ENCODE measurements at regions of chr6 and their contacts with region 1.

Region 1: DNA sequence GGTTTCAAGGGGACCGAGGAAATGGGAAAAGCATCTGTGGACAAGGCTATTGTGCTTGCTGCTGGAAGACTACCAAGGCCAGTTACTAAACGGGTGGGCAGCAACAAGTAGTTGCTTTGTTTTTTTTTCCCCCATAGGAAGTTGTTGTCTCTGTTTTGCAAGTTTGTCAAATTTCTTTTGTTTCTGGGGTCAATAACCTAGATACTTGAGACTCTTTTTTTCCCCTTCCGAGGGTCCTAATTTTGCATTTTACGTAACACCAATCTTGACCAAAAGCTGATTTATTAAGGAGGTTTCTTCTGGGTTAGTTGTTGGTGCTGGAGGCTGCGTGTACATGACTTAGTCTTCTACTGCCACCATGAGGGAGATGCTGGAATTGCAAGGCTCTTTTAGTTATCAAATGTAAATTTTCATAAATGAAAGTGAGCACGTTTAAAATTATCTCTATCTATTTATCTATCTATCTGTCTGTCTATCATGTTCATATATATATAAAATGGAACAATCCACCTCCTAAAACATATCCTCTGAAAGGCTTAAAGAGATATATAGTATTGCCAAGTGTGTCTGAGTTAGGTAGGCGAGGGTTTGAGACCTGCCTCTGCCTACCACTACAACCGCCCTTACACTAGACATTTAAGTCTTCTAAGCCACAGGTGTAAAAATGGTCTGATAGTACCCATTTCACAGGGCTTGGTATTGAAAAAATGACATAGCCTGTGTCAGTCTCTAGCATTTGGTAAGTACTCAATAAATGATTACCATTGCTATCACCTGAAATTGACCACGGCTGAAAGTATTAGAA is 60.2 kb downstream of the GCLC start:
- DNase-seq: peak; percentile 75
- ATAC-seq: peak; percentile 88
- H3K4me3 ChIP-seq: no peak overlapping the region
- H3K27ac ChIP-seq: no peak overlapping the region
- H3K4me1 ChIP-seq: no peaks in the 10 kb centered on the region
- H3K27me3 ChIP-seq: peaks cover 17% of the 10 kb centered on the region
- CTCF ChIP-seq: peak; percentile 99
- POLR2A ChIP-seq: no peak
- RAD21 ChIP-seq: peak; percentile 97

Region 2: DNA sequence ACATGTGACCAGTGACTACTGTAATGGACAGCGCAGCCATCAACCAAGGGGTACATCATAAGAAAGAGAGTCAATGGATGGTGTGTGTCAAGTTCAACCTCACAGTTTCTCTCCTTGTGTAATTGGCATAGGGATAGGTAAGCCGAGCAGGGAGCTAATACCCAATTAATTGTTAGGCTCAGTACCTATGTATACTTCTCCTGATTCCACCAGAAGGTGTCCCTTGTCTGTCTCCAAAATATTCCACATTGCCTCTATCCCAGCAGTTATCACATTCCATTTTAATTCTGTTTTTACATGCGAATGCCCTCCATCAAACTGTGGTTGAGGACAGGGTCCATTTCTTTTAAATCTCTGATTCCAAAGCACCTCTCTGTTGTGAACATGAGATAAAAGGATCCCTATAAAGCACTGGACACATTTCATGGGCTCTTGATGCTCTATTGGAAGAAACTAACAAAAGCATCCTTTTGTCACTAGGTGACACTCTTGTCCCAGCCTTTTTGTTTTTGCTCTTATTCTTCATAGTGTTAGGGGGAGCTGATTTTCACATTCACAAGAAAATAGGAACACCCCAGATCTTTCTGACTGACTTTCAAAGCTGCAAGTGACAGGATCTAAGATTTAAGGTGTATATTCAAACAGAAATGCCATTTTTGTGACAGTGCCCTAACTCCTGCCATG is 380.5 kb before region 1 on chr6:
- CTCF ChIA-PET with region 1: no interaction called
- POLR2A ChIA-PET with region 1: no interaction called
- dilution Hi-C with region 1: no loop called
- in situ Hi-C with region 1: no loop called
- intact Hi-C with region 1: loop called (anchors 5 kb)
- DNase-seq: no peak
- ATAC-seq: no peak
- H3K4me3 ChIP-seq: no peak overlapping the region
- H3K27ac ChIP-seq: no peak overlapping the region
- H3K4me1 ChIP-seq: peaks cover 9% of the 10 kb centered on the region
- H3K27me3 ChIP-seq: no peaks in the 10 kb centered on the region
- CTCF ChIP-seq: no peak
- POLR2A ChIP-seq: no peak
- RAD21 ChIP-seq: no peak

Region 3: DNA sequence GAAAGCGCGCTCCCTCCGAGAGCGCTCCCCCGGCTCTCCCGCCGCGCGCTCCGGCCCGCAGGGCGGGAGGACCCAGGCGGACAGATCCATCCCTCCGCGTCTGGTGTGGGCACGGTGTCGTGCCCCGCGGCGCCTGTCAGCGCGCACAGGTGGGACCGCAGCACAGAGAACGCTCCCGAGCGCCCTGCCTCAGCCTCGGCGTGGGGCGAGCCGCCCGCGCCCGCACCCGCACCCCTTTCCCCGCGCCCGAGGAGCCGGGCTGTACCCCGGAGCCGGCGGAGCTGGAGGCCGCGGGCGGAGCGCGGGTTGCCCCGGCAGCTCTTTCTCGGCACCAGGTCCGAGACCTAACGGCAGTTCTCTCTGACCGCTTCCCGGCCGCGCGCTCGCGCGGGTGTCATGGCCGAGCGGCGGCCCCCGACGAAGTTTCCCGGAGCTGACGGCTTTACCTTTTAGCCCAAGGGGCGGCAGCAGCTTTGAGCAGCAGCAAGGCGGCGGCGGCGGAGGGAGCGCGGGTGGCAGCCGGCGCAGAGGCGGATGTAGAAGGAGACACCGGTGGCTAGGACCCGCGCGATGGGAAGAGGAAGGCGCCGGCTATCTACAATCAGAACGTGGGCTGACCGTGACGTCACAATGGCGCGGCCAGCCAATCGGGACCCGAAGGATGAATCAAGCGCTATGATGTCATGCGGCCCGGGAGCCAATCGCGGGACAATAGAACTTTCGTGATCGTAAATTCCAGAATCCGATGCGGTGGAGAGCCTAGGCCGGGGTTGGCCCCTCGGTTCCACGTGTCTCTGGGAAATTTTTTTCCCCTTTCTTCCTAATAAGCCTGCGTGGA is 136.1 kb before region 1 on chr6 and contains the start of gene ELOVL5:
- CTCF ChIA-PET with region 1: no interaction called
- POLR2A ChIA-PET with region 1: no interaction called
- dilution Hi-C with region 1: no loop called
- in situ Hi-C with region 1: no loop called
- intact Hi-C with region 1: loop called (anchors 5 kb)
- DNase-seq: peak; percentile 98
- ATAC-seq: peak; percentile 65
- H3K4me3 ChIP-seq: peak within 1 kb of the TSS; percentile 95
- H3K27ac ChIP-seq: peak within 1 kb of the TSS; percentile 91
- H3K4me1 ChIP-seq: 0 out of 2 replicates have a peak, but pooled peaks cover 1% of the 10 kb centered on the region
- H3K27me3 ChIP-seq: peaks cover 3% of the 10 kb centered on the region; the same call in 1 of the 2 replicates
- CTCF ChIP-seq: no peak
- POLR2A ChIP-seq: peak; percentile 84
- RAD21 ChIP-seq: no peak
- total RNA-seq, gene ELOVL5: 42.3 and 50.5 TPM in 2 replicates

Region 4: GRCh38 chr6:53437557-53438202 is 47.0 kb before region 1 on chr6:
- CTCF ChIA-PET with region 1: interaction called, 5 read pairs
- POLR2A ChIA-PET with region 1: no interaction called
- dilution Hi-C with region 1: no loop called
- in situ Hi-C with region 1: no loop called
- intact Hi-C with region 1: loop called (anchors 1 kb)
- DNase-seq: peak; percentile 91
- ATAC-seq: peak; percentile 90
- H3K4me3 ChIP-seq: no peak overlapping the region
- H3K27ac ChIP-seq: no peak overlapping the region
- H3K4me1 ChIP-seq: peaks cover 10% of the 10 kb centered on the region
- H3K27me3 ChIP-seq: no peaks in the 10 kb centered on the region
- CTCF ChIP-seq: peak; percentile 93
- POLR2A ChIP-seq: no peak
- RAD21 ChIP-seq: peak; percentile 83

Measured in IMR-90 (cell line).